ENCODE measurements at regions of chr5 and their contacts with region 1.

Region 1: DNA sequence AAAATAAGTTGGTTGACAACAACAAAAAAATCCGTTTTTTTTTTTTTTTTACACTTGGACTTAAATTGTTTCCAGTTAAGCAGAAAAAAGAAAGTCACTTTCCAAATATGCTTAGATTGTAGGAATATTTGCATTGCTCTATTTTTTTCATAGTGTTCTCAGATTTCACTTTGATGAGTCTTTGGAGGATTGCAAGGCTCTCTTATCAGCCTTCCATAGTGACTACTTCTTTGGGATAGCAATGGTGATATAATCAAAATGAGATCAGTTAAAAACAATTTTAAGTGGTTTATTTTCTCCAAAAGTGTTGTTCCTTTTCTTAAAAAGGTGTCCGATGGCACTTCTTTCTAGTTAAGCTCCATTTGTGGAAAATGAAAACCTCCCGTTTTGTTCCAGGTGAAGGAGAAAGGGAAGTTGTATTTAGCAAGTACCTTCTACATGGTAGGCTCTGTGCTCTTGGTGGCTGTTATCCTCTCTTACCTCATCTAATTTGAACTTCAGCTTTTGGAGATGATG is 3.9 kb downstream of the RASGRF2 start:
- DNase-seq: no peak
- H3K4me3 ChIP-seq: no peak overlapping the region
- H3K27me3 ChIP-seq: 0 out of 2 replicates have a peak, but pooled peaks cover 1% of the 10 kb centered on the region
- CTCF ChIP-seq: no peak

Region 2: GRCh38 chr5:80917631-80918030 is 46.4 kb before region 1 on chr5:
- CTCF ChIA-PET with region 1: no interaction called
- POLR2A ChIA-PET with region 1: interaction called, 15 read pairs
- DNase-seq: peak; percentile 81
- H3K4me3 ChIP-seq: no peak overlapping the region
- H3K27me3 ChIP-seq: no peaks in the 10 kb centered on the region
- CTCF ChIP-seq: no peak

Region 3: GRCh38 chr5:80942053-80942452 is 22.0 kb before region 1 on chr5:
- CTCF ChIA-PET with region 1: no interaction called
- POLR2A ChIA-PET with region 1: no interaction called
- DNase-seq: no peak
- H3K4me3 ChIP-seq: no peak overlapping the region
- H3K27me3 ChIP-seq: 0 out of 2 replicates have a peak, but pooled peaks cover 1% of the 10 kb centered on the region
- CTCF ChIP-seq: no peak

Region 4: DNA sequence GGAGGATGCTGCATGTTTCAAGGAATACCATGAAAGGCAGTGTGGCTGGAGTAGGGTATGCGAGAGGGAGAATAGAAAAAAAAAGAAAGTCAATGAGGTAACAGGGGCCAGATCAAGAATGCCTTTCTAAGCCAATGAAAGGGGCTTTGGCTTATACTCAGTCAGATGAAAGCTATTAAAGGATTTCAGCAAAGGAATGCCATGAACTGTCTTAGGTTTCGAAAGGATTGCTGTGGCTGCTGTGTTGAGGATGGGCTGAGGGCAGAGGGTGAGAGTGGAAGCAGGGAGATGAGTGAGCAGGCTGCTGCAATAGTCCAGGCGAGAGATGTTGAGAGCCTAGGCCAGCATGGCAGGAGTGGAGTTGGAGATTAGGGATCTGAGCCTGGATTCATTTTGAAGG is 133.7 kb after region 1 on chr5:
- CTCF ChIA-PET with region 1: no interaction called
- POLR2A ChIA-PET with region 1: no interaction called
- DNase-seq: peak; percentile 17
- H3K4me3 ChIP-seq: no peak overlapping the region
- H3K27me3 ChIP-seq: no peaks in the 10 kb centered on the region
- CTCF ChIP-seq: no peak